Activated CD4-positive, alpha-beta T cell treated with anti-CD3 and anti-CD28 coated beads for 36 hours (primary cell): ENCODE measurements at regions of chr2 and their contacts with region 1.

Region 1: DNA sequence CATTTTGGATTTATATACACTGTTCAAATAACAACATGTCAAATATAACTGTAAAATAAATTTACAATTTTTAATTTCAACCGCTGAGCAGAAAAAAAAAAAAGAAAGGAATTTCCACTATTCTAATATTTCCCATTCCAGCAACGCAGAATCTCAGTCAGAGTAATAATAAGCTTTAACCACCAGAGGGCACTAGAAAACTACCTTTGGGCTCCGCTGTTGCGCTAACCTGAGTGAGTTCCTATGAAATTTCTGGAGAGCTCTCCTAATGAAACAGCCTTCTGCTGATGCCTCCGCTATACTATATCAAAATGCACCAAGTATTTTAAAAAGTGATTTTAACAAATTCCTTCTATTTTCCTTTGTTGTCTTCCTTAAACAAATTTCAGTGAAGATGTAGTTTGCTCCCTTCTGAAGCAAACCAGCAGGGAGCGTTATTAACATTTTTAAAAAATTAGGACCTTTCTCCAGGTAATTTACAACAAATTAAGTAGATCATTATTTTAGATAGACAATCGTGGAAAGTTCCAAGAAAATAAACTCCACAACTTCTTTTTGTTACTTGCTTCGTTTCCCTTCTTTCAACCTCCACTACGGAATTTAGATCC is 23.0 kb downstream of the ERMN start:
- DNase-seq: peak; percentile 50
- ATAC-seq: peak; percentile 75
- H3K4me3 Mint-ChIP-seq: no peak overlapping the region
- H3K27ac Mint-ChIP-seq: no peak overlapping the region
- H3K4me1 Mint-ChIP-seq: peaks cover 30% of the 10 kb centered on the region
- H3K27me3 Mint-ChIP-seq: peaks cover 3% of the 10 kb centered on the region

Region 2: GRCh38 chr2:157290525-157290924 is 12.1 kb before region 1 on chr2:
- CTCF ChIA-PET with region 1: interaction called, 21 read pairs
- POLR2A ChIA-PET with region 1: no interaction called
- intact Hi-C with region 1: no loop called
- DNase-seq: no peak
- ATAC-seq: no peak
- H3K4me3 Mint-ChIP-seq: no peak overlapping the region
- H3K27ac Mint-ChIP-seq: no peak overlapping the region
- H3K4me1 Mint-ChIP-seq: no peaks in the 10 kb centered on the region
- H3K27me3 Mint-ChIP-seq: no peaks in the 10 kb centered on the region

Region 3: GRCh38 chr2:157336137-157337010 is 33.8 kb after region 1 on chr2:
- CTCF ChIA-PET with region 1: interaction called, 189 read pairs
- POLR2A ChIA-PET with region 1: interaction called, 8 read pairs
- intact Hi-C with region 1: loop called in 1 of 2 experiments (anchors 5 kb)
- DNase-seq: peak; percentile 60
- ATAC-seq: no peak
- H3K4me3 Mint-ChIP-seq: peak overlapping the region; percentile 37
- H3K27ac Mint-ChIP-seq: no peak overlapping the region
- H3K4me1 Mint-ChIP-seq: peaks cover 70% of the 10 kb centered on the region
- H3K27me3 Mint-ChIP-seq: no peaks in the 10 kb centered on the region

Region 4: DNA sequence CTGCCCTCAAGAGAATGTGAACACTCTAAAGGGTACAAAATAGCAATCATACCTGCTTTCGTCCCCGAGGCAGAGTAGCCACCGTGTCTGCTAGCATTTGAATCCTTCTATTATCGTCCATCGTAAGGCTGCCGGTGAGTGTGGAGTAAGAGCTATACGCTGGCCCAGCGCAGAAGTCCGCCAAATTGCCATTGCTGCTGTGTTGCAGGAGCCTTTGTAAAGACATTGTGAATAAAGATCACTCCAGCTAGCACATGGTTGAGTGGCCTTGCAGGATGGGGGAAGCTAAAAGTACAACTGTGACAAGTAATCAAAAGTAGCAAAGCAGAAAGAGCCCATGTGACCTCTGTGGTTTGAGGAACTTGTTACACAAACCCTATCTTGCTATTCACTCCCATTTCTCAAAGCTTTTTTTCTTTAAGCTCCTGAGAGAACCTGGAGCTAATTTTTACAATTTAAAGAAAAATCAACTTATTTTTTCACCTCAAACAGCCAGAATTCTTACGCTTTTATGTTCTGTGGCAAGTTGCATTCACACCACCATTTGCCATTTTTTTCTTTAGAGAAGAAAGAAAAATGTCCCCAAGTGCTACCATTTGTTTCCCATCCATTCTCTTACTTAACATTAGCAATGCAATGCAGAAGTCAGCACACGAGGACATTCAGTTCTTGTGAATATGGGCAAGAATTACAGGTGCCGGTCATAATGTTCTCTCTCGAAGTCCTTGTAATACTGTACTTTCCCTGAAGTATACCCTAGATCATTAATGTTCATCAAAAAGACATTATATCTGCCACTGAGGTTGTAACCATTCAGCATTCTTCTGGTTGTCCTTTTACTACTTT is 141.4 kb after region 1 on chr2 and contains the start of gene CYTIP:
- CTCF ChIA-PET with region 1: interaction called, 29 read pairs
- POLR2A ChIA-PET with region 1: interaction called, 10 read pairs
- intact Hi-C with region 1: no loop called
- DNase-seq: peak; percentile 82
- ATAC-seq: peak; percentile 44
- H3K4me3 Mint-ChIP-seq: peak within 1 kb of the TSS; percentile 93
- H3K27ac Mint-ChIP-seq: peak within 1 kb of the TSS; percentile 95
- H3K4me1 Mint-ChIP-seq: peaks cover 40% of the 10 kb centered on the region
- H3K27me3 Mint-ChIP-seq: no peaks in the 10 kb centered on the region
- total RNA-seq, gene CYTIP: 470 to 536 TPM

Region 5: GRCh38 chr2:157596992-157597681 is 294.5 kb after region 1 on chr2:
- CTCF ChIA-PET with region 1: interaction called, 36 read pairs
- POLR2A ChIA-PET with region 1: no interaction called
- intact Hi-C with region 1: loop called (anchors 1 to 2 kb)
- DNase-seq: peak; percentile 81
- ATAC-seq: peak; percentile 88
- H3K4me3 Mint-ChIP-seq: peak overlapping the region; percentile 59
- H3K27ac Mint-ChIP-seq: no peak overlapping the region
- H3K4me1 Mint-ChIP-seq: peaks cover 8% of the 10 kb centered on the region
- H3K27me3 Mint-ChIP-seq: peaks cover 5% of the 10 kb centered on the region

Region 6: GRCh38 chr2:157777427-157777826 is 474.8 kb after region 1 on chr2:
- CTCF ChIA-PET with region 1: interaction called, 6 read pairs
- POLR2A ChIA-PET with region 1: no interaction called
- intact Hi-C with region 1: loop called in 1 of 2 experiments (anchors 2 kb)
- DNase-seq: peak; percentile 68
- ATAC-seq: no peak
- H3K4me3 Mint-ChIP-seq: no peak overlapping the region
- H3K27ac Mint-ChIP-seq: no peak overlapping the region
- H3K4me1 Mint-ChIP-seq: peaks cover 12% of the 10 kb centered on the region
- H3K27me3 Mint-ChIP-seq: no peaks in the 10 kb centered on the region

Region 7: GRCh38 chr2:158753641-158754611 is 1451.3 kb after region 1 on chr2:
- CTCF ChIA-PET with region 1: interaction called, 3 read pairs
- POLR2A ChIA-PET with region 1: no interaction called
- intact Hi-C with region 1: loop called in 1 of 2 experiments (anchors 10 kb)
- DNase-seq: peak; percentile 44
- ATAC-seq: peak; percentile 63
- H3K4me3 Mint-ChIP-seq: no peak overlapping the region
- H3K27ac Mint-ChIP-seq: no peak overlapping the region
- H3K4me1 Mint-ChIP-seq: peaks cover 3% of the 10 kb centered on the region
- H3K27me3 Mint-ChIP-seq: peaks cover 11% of the 10 kb centered on the region